ENCODE measurements at regions of chr9 and their contacts with region 1.

Region 1: DNA sequence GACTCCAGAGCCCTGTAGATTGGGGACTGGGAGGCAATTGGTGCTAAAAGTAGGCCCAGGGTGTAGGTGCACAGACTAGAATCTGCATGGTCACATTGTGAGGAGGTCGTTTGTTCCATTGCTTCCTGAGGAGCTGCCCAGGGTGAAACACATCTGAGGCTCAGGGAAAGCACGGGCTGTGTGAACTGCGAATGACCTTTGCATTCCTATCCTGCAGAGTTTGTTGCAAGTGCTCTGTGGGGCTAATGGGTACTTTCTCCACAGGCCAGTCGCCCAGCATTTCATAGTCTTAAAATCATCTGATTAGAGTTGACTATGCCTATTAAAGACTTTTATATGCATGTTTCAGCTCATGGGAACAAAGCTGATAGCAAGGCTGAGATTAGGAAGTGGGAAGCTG is 14.4 kb upstream of the SLC46A2 start:
- DNase-seq: no peak
- H3K4me3 ChIP-seq: no peak overlapping the region
- H3K27ac ChIP-seq: no peak overlapping the region
- H3K4me1 ChIP-seq: peaks cover 0 to 7% (median 0%) of the 10 kb centered on the region in 6 donors
- H3K27me3 ChIP-seq: no peaks in the 10 kb centered on the region
- CTCF ChIP-seq: no peak
- POLR2A ChIP-seq: no peak

Region 2: DNA sequence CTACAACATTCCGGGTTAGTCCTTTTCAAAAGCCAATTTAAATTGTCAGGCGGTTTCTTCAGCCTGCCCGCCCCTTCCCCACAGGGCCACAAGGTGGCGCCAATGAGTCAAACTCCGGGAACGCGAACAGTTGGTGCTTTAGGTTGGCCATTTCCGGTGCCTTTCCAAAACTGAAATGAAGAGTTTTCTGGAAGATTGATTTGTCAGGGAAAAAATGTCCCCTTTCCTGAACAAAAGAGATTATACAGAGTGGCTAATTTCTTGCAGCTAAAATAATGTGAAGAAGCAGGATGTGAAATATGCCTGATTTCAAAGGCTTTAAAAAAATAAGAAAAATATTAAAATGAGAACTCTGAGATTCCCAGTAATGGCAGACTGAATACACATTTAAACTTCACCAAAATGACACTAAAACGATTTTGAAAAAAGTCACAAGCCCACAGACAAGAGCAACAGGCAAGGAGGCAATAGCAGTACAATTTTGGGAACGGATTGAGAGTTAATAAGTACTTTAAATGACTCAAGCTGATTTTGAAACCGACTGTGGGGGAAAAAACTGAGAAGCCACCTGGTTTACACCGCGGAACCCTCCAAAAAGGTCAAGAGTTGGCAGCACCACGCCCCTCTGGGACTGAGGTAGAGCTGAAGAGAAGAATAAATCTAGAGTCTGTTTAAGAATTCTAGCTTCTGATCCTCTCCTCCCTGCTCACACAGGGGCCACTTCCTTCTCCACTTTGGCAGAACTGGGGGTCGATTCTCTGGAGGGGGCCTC is 60.1 kb before region 1 on chr9:
- intact Hi-C with region 1: loop called (anchors 10 kb)
- DNase-seq: peak; percentile 91
- H3K4me3 ChIP-seq: no peak overlapping the region
- H3K27ac ChIP-seq: peak overlapping the region in 1 of 8 donors; percentile 29
- H3K4me1 ChIP-seq: peaks cover 6 to 34% (median 17%) of the 10 kb centered on the region in 6 donors
- H3K27me3 ChIP-seq: no peaks in the 10 kb centered on the region
- CTCF ChIP-seq: peak; percentile 85 to 98 (median 96)
- POLR2A ChIP-seq: no peak